PC-3 (cell line): ENCODE measurements at regions of chr12 and their contacts with region 1.

Region 1: GRCh38 chr12:60977966-60978365 is 1282.2 kb upstream of the USP15 start:
- DNase-seq: peak; percentile 24
- ATAC-seq: no peak
- H3K4me3 ChIP-seq: no peak overlapping the region
- H3K27ac ChIP-seq: no peak overlapping the region
- H3K4me1 ChIP-seq: no peaks in the 10 kb centered on the region
- H3K27me3 ChIP-seq: no peaks in the 10 kb centered on the region
- CTCF ChIP-seq: peak; percentile 48

Region 2: GRCh38 chr12:60501124-60501729 is 476.7 kb before region 1 on chr12:
- CTCF ChIA-PET with region 1: interaction called, 5 read pairs
- POLR2A ChIA-PET with region 1: no interaction called
- intact Hi-C with region 1: loop called (anchors 5 kb)
- DNase-seq: peak; percentile 42
- ATAC-seq: peak; percentile 48; the same call in 1 of the 2 replicates
- H3K4me3 ChIP-seq: no peak overlapping the region
- H3K27ac ChIP-seq: no peak overlapping the region
- H3K4me1 ChIP-seq: no peaks in the 10 kb centered on the region
- H3K27me3 ChIP-seq: no peaks in the 10 kb centered on the region
- CTCF ChIP-seq: peak; percentile 50

Region 3: GRCh38 chr12:60710246-60710645 is 267.7 kb before region 1 on chr12:
- CTCF ChIA-PET with region 1: no interaction called
- POLR2A ChIA-PET with region 1: no interaction called
- intact Hi-C with region 1: loop called (anchors 10 kb)
- DNase-seq: peak; percentile 50
- ATAC-seq: peak; percentile 95
- H3K4me3 ChIP-seq: no peak overlapping the region
- H3K27ac ChIP-seq: peak overlapping the region; percentile 16; the same call in 1 of the 2 replicates
- H3K4me1 ChIP-seq: peaks cover 11% of the 10 kb centered on the region
- H3K27me3 ChIP-seq: no peaks in the 10 kb centered on the region
- CTCF ChIP-seq: no peak

Region 4: DNA sequence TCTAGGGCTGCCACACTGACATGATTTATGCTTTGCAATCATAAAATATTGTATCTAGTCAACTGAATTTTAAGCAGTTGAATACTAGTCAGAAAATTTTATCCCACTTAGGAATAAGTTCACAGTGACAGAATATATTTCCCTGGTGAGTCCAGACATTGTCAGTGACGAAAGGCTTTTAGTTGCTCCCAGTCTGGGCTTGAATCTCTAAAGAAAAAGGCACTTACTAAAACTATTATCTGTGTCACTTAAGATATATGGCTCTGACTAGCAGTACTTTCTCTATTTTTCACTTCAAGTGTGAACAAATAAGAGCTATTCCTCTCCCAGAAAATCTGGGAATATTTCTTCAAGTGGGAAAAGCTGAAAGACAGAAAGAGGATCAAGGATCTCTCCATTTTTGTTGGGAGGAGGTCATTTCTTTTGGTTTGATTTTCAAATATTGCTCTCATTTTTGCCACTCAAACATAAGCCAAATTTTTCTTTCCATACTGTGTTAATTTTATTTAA is 20.0 kb after region 1 on chr12:
- CTCF ChIA-PET with region 1: no interaction called
- POLR2A ChIA-PET with region 1: no interaction called
- intact Hi-C with region 1: no loop called
- DNase-seq: no peak
- ATAC-seq: no peak
- H3K4me3 ChIP-seq: no peak overlapping the region
- H3K27ac ChIP-seq: no peak overlapping the region
- H3K4me1 ChIP-seq: no peaks in the 10 kb centered on the region
- H3K27me3 ChIP-seq: no peaks in the 10 kb centered on the region
- CTCF ChIP-seq: no peak

Region 5: GRCh38 chr12:61018571-61018970 is 40.6 kb after region 1 on chr12:
- CTCF ChIA-PET with region 1: no interaction called
- POLR2A ChIA-PET with region 1: no interaction called
- intact Hi-C with region 1: no loop called
- DNase-seq: no peak
- ATAC-seq: no peak
- H3K4me3 ChIP-seq: no peak overlapping the region
- H3K27ac ChIP-seq: no peak overlapping the region
- H3K4me1 ChIP-seq: no peaks in the 10 kb centered on the region
- H3K27me3 ChIP-seq: no peaks in the 10 kb centered on the region
- CTCF ChIP-seq: no peak